ENCODE measurements at regions of chr10 and their contacts with region 1.

Region 1: GRCh38 chr10:128211953-128212727 is 85.9 kb upstream of the MKI67 start:
- DNase-seq: peak; percentile 68 to 90 (median 81)
- ATAC-seq: peak; percentile 77
- H3K4me3 ChIP-seq: peak overlapping the region; percentile 39 to 43
- H3K4me3 Mint-ChIP-seq: peak overlapping the region; percentile 83
- H3K27ac ChIP-seq: no peak overlapping the region
- H3K27ac Mint-ChIP-seq: peak overlapping the region; percentile 66
- H3K4me1 ChIP-seq: peaks cover 8% of the 10 kb centered on the region
- H3K4me1 Mint-ChIP-seq: peaks cover 16% of the 10 kb centered on the region
- H3K27me3 ChIP-seq: no peaks in the 10 kb centered on the region
- H3K27me3 Mint-ChIP-seq: no peaks in the 10 kb centered on the region
- CTCF ChIP-seq: peak; percentile 95

Region 2: GRCh38 chr10:128078136-128078969 is 133.8 kb before region 1 on chr10:
- CTCF ChIA-PET with region 1: interaction called, 6 read pairs
- POLR2A ChIA-PET with region 1: no interaction called
- intact Hi-C with region 1: loop called in 1 of 2 experiments (anchors 5 kb)
- DNase-seq: peak in 5 of 9 experiments; percentile 29 to 72 (median 51)
- ATAC-seq: peak; percentile 78
- H3K4me3 ChIP-seq: no peak overlapping the region
- H3K4me3 Mint-ChIP-seq: no peak overlapping the region
- H3K27ac ChIP-seq: no peak overlapping the region
- H3K27ac Mint-ChIP-seq: no peak overlapping the region
- H3K4me1 ChIP-seq: no peaks in the 10 kb centered on the region
- H3K4me1 Mint-ChIP-seq: peaks cover 6% of the 10 kb centered on the region
- H3K27me3 ChIP-seq: no peaks in the 10 kb centered on the region
- H3K27me3 Mint-ChIP-seq: no peaks in the 10 kb centered on the region
- CTCF ChIP-seq: peak; percentile 44

Region 3: GRCh38 chr10:128150045-128150493 is 62.1 kb before region 1 on chr10:
- CTCF ChIA-PET with region 1: interaction called, 8 read pairs
- POLR2A ChIA-PET with region 1: no interaction called
- intact Hi-C with region 1: loop called in 1 of 2 experiments (anchors 1 kb)
- DNase-seq: peak; percentile 54 to 91 (median 80)
- ATAC-seq: peak; percentile 98
- H3K4me3 ChIP-seq: peak overlapping the region; percentile 66 to 83
- H3K4me3 Mint-ChIP-seq: peak overlapping the region; percentile 73
- H3K27ac ChIP-seq: no peak overlapping the region
- H3K27ac Mint-ChIP-seq: no peak overlapping the region
- H3K4me1 ChIP-seq: peaks cover 4% of the 10 kb centered on the region
- H3K4me1 Mint-ChIP-seq: peaks cover 2% of the 10 kb centered on the region
- H3K27me3 ChIP-seq: no peaks in the 10 kb centered on the region
- H3K27me3 Mint-ChIP-seq: no peaks in the 10 kb centered on the region
- CTCF ChIP-seq: peak; percentile 91

Region 4: DNA sequence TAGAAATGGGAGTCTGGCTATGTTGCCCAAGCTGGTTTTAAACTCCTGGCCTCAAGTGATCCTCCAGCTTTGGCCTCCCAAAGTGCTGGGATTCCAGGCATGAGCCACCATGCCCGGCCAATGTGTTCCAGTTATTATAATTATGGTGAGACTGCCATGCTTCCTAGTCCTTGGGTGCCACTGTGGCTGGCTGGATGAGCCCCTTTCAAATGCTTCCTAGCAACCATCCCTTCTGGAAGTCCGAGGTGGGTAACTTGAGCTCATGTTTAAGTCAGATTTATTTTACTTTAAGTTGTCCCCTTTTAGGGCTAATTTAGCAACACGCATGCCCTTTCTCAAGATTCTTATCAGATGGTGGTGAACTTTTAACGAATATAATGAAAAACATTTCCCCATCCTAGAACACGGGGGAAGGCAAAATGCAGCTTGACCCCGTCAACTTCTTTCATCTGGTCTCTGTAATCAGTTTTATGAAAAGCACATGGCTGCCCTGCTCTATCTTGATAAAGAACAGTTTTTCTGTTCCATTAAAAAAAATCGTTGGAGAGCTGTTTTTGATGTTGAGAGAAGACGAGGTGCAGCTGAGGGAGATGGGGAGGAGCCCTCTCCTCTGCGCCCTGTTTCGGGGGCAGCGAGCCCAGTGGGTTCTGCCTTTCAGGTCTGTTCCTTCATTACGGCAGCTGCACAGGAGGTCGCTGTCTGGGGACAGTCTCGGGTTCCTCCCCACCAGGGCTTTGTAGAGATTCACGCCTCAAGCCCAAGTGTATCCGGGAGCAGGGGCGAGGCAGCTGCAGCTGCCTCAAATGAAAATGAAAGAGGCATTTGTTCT is 25.0 kb before region 1 on chr10:
- CTCF ChIA-PET with region 1: interaction called, 30 read pairs
- POLR2A ChIA-PET with region 1: interaction called, 8 read pairs
- intact Hi-C with region 1: no loop called
- DNase-seq: peak in 8 of 9 experiments; percentile 13 to 76 (median 39)
- ATAC-seq: peak; percentile 81
- H3K4me3 ChIP-seq: peak overlapping the region; percentile 41 to 49
- H3K4me3 Mint-ChIP-seq: peak overlapping the region; percentile 84
- H3K27ac ChIP-seq: peak overlapping the region; percentile 21 to 69
- H3K27ac Mint-ChIP-seq: peak overlapping the region; percentile 81
- H3K4me1 ChIP-seq: peaks cover 16% of the 10 kb centered on the region
- H3K4me1 Mint-ChIP-seq: peaks cover 19% of the 10 kb centered on the region
- H3K27me3 ChIP-seq: no peaks in the 10 kb centered on the region
- H3K27me3 Mint-ChIP-seq: no peaks in the 10 kb centered on the region
- CTCF ChIP-seq: no peak

Region 5: DNA sequence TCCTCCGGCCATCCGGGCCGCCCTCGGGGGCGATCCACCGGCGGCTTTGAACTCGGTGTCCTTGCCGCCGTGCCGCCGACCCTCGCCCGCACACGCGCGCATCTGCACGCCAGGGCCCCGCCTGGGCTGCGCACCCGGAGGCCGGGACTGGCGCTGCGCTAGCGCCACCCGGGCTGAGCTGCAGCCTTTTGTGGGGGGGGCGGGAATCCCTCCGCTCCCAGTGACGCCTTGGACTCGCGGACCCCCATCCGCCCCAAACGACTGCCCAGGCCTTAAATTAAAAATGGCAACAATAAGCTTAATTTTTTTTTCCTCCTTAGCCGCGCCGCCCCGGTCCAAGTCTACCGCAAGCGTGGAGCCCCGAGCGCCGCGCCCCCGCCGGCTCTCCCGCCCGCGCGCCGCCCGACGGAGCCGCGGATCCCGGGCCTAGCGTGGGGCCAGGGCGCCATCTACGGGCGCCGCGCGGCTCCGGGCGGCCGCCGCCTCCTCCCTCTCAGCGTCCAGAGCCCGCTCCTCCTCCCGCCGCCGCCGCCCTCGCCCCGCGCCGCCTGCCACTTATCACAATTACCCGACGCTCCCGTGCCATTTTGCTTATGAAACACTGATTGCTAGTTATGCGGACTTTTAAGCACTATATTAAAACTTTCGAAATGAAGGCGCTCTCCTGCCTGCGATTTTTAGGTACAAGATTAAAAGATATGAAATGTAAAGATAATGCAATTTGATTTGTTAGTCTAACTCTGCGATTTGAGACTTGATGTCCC is 1759.4 kb after region 1 on chr10:
- CTCF ChIA-PET with region 1: no interaction called
- POLR2A ChIA-PET with region 1: no interaction called
- intact Hi-C with region 1: loop called (anchors 5 kb)
- DNase-seq: peak in 2 of 9 experiments; percentile 46 to 59
- ATAC-seq: peak; percentile 48
- H3K4me3 ChIP-seq: no peak overlapping the region
- H3K4me3 Mint-ChIP-seq: peak overlapping the region; percentile 70
- H3K27ac ChIP-seq: no peak overlapping the region
- H3K27ac Mint-ChIP-seq: no peak overlapping the region
- H3K4me1 ChIP-seq: peaks cover 8% of the 10 kb centered on the region
- H3K4me1 Mint-ChIP-seq: peaks cover 13% of the 10 kb centered on the region
- H3K27me3 ChIP-seq: peaks cover 24 to 54% of the 10 kb centered on the region in 2 experiments
- H3K27me3 Mint-ChIP-seq: peaks cover 52% of the 10 kb centered on the region
- CTCF ChIP-seq: no peak

Region 6: DNA sequence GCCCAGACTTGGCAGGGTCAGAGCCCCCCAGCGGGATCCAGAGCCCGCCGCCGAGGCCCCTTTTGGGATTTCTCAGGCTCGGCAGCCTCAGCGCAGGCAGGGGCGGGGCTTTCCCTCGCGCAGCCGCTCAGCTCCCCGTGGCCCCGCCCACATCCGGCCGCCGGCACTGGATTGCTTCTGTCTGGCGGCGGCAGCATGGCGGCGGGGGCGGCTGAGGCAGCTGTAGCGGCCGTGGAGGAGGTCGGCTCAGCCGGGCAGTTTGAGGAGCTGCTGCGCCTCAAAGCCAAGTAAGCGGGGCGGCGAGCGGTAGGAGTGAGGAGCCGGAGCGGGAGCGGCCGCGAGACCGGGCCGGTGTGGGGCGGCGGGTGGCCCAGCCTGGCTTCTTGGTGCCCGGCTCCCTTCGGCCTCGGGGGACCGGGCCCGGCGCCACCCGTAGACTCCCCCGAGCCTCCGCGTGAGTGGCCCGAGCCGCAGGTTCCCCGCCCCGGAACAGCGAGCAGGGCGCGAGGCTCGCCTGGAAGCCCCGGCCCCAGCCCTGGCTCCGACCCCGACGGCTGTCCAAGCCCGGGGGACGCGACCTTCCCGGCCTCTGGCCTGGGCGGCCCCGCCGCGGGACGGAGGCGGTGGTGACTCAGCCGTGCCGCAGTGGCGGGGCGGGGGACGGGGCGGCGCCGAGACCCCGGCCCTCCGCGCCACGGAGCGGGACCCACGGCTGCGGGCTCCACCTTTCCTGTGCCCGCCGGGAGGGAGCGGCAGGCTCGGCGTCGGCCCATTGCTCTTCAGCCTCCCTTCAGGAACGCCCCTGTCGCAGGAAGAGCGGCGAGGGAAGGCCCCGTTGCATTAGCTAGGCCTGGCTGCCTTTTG is 1924.3 kb after region 1 on chr10 and contains the start of gene GLRX3:
- CTCF ChIA-PET with region 1: no interaction called
- POLR2A ChIA-PET with region 1: no interaction called
- intact Hi-C with region 1: loop called in 1 of 2 experiments (anchors 5 kb)
- DNase-seq: peak; percentile 71 to 93 (median 88)
- ATAC-seq: peak; percentile 95
- H3K4me3 ChIP-seq: peak within 1 kb of the TSS; percentile 76 to 80
- H3K4me3 Mint-ChIP-seq: peak within 1 kb of the TSS; percentile 93
- H3K27ac ChIP-seq: peak within 1 kb of the TSS; percentile 61 to 79
- H3K27ac Mint-ChIP-seq: peak within 1 kb of the TSS; percentile 92
- H3K4me1 ChIP-seq: peaks cover 36% of the 10 kb centered on the region
- H3K4me1 Mint-ChIP-seq: peaks cover 42% of the 10 kb centered on the region
- H3K27me3 ChIP-seq: no peaks in the 10 kb centered on the region
- H3K27me3 Mint-ChIP-seq: peaks cover 4% of the 10 kb centered on the region
- CTCF ChIP-seq: no peak
- total RNA-seq, gene GLRX3: 20.7 to 23.7 TPM

Measured in CD8-positive, alpha-beta T cell (primary cell).